ENCODE measurements at regions of chr7 and their contacts with region 1.

Region 1: GRCh38 chr7:151736403-151736909 is 140.5 kb downstream of the PRKAG2 start:
- DNase-seq: peak; percentile 81
- ATAC-seq: peak; percentile 90
- H3K4me3 ChIP-seq: peak overlapping the region; percentile 12; the same call in 1 of the 2 replicates
- H3K27ac ChIP-seq: peak overlapping the region; percentile 15; the same call in 1 of the 2 replicates
- H3K4me1 ChIP-seq: peaks cover 12% of the 10 kb centered on the region
- H3K27me3 ChIP-seq: no peaks in the 10 kb centered on the region
- CTCF ChIP-seq: no peak

Region 2: GRCh38 chr7:151648429-151648828 is 88.0 kb before region 1 on chr7:
- CTCF ChIA-PET with region 1: no interaction called
- POLR2A ChIA-PET with region 1: no interaction called
- intact Hi-C with region 1: no loop called
- DNase-seq: peak; percentile 71
- ATAC-seq: peak; percentile 81
- H3K4me3 ChIP-seq: no peak overlapping the region
- H3K27ac ChIP-seq: peak overlapping the region; percentile 81
- H3K4me1 ChIP-seq: peaks cover 36% of the 10 kb centered on the region
- H3K27me3 ChIP-seq: no peaks in the 10 kb centered on the region
- CTCF ChIP-seq: no peak

Region 3: DNA sequence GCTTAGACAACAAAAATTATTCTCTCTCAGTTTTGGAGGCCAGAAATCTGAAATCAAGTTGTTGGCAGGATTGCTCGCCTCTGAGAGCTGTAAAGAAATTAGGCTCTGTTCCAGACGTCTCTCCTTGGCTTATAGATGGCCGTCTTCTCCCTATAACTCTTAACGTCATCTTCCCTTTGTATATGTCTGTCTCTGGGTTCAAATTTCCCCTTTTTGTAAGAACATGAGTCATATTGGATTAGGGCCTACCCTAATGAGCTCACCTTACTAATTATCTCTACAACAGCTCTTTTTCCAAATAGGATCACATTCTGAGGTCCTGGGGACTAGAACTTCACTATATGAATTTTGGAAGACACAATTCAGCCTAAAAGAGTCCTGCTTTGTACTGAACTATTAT is 242.2 kb after region 1 on chr7:
- CTCF ChIA-PET with region 1: interaction called, 11 read pairs
- POLR2A ChIA-PET with region 1: no interaction called
- intact Hi-C with region 1: no loop called
- DNase-seq: no peak
- ATAC-seq: no peak
- H3K4me3 ChIP-seq: no peak overlapping the region
- H3K27ac ChIP-seq: no peak overlapping the region
- H3K4me1 ChIP-seq: no peaks in the 10 kb centered on the region
- H3K27me3 ChIP-seq: no peaks in the 10 kb centered on the region
- CTCF ChIP-seq: no peak

Measured in PC-3 (cell line).